Activated T-helper 1 cell treated with anti-CD3 and anti-CD28 coated beads, Interleukin-12 subunit alpha, Interleukin-12 subunit beta, Interleukin-2, Interleukin-4 antibody, amounts not matched to agents 30 ng/mL and 10 ng/mL and 1 ng/mL, durations not matched to agents 14 hours and 24 hours and 36 hours (primary cell): ENCODE measurements at regions of chr5 and their contacts with region 1.

Region 1: DNA sequence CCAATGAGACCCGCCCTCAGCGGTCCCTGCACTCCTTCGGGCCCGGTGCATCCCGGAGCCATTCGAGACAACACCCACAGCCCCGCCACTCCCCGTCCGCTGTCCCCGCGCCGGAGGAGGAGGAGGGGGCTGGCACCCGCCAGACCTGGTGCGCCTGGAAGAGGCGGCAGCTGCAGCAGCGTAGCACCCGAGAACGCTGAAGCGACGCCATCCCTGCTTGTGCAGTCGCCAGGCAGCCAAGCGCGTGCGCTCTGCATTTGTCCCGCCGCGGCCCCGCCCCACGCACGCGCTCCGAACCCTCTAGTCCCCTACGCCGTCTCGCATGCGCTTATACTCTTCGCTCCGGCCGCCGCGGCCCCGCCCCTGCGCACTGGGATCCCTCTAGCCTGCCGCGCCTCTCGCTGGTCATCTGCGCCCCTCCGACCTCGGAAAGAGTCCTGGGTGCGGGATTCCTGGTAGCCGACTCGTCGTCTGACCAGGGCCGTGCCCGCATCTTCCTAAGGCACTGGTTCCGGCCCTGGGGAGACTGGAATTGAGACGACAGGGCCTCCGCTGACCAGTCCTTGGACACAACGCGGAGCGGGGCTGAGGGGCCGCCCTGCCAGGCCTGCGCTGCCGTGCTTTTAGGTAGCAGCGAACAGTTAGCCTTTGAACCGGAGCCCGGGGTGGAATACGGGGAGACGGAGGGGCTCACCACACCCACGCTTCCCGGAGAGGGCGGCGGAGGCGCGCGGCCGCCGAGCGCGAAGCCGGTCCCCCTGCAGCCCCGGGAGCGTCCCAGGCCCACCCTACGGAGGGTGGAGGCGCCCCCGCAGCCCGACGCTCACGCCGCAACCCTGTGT is at the start of gene MRNIP:
- DNase-seq: peak; percentile 87
- H3K4me3 Mint-ChIP-seq: peak within 1 kb of the TSS; percentile 96
- H3K27ac Mint-ChIP-seq: peak within 1 kb of the TSS; percentile 92
- H3K4me1 Mint-ChIP-seq: peaks cover 9% of the 10 kb centered on the region
- H3K27me3 Mint-ChIP-seq: no peaks in the 10 kb centered on the region
- total RNA-seq, gene MRNIP: 24.6 and 26.3 TPM in 2 replicates

Region 2: DNA sequence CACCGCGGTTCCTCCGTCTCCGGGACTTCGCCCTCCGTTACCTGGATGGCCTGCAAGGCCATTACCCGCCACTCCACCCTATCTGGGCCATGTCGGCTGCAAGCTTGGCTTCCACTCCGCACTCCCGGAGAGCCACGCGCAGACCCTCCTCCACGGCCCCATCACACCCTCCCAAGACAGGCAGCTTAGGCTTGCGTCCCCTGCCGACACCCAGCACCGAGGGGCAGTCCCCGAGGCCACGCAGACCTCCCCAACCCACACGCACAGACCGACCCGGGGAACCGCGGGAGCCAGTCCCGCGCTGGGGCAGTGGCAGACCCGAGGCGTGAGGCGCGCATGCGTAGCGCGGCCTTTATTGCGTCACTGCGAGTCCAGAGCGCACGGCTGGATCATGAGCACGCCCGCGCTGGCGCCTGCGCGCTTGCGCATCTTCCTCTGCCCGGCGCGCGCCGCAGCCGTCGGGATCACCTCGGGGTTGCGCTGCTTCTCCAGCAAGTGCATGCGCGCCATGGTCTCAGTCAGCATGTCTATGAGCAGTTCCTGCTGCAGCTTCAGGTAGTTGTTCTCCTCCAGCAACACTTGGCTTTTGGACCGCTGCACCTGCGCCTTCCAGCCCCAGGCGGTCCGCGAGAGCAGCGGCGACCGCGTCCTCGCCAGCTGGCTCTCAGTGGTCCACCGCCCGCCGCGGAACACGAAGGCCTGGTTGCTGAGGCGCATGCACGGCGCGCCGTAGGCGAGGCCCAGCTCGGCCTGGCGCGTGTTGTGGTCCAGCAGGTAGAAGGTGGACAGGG is 180.4 kb before region 1 on chr5:
- intact Hi-C with region 1: loop called (anchors 1 kb)
- DNase-seq: peak; percentile 93
- H3K4me3 Mint-ChIP-seq: peak overlapping the region; percentile 99
- H3K27ac Mint-ChIP-seq: peak overlapping the region; percentile 98
- H3K4me1 Mint-ChIP-seq: peaks cover 21% of the 10 kb centered on the region
- H3K27me3 Mint-ChIP-seq: no peaks in the 10 kb centered on the region

Region 3: GRCh38 chr5:179732417-179732917 is 126.3 kb before region 1 on chr5 and contains the start of gene MAML1:
- intact Hi-C with region 1: loop called (anchors 1 kb)
- DNase-seq: peak; percentile 100
- H3K4me3 Mint-ChIP-seq: peak within 1 kb of the TSS; percentile 95
- H3K27ac Mint-ChIP-seq: peak within 1 kb of the TSS; percentile 93
- H3K4me1 Mint-ChIP-seq: peaks cover 26% of the 10 kb centered on the region
- H3K27me3 Mint-ChIP-seq: no peaks in the 10 kb centered on the region
- total RNA-seq, gene MAML1: 36.0 and 37.6 TPM in 2 replicates

Region 4: GRCh38 chr5:179749857-179750508 is 108.8 kb before region 1 on chr5:
- intact Hi-C with region 1: no loop called
- DNase-seq: no peak
- H3K4me3 Mint-ChIP-seq: no peak overlapping the region
- H3K27ac Mint-ChIP-seq: no peak overlapping the region
- H3K4me1 Mint-ChIP-seq: peaks cover 20% of the 10 kb centered on the region
- H3K27me3 Mint-ChIP-seq: no peaks in the 10 kb centered on the region

Region 5: DNA sequence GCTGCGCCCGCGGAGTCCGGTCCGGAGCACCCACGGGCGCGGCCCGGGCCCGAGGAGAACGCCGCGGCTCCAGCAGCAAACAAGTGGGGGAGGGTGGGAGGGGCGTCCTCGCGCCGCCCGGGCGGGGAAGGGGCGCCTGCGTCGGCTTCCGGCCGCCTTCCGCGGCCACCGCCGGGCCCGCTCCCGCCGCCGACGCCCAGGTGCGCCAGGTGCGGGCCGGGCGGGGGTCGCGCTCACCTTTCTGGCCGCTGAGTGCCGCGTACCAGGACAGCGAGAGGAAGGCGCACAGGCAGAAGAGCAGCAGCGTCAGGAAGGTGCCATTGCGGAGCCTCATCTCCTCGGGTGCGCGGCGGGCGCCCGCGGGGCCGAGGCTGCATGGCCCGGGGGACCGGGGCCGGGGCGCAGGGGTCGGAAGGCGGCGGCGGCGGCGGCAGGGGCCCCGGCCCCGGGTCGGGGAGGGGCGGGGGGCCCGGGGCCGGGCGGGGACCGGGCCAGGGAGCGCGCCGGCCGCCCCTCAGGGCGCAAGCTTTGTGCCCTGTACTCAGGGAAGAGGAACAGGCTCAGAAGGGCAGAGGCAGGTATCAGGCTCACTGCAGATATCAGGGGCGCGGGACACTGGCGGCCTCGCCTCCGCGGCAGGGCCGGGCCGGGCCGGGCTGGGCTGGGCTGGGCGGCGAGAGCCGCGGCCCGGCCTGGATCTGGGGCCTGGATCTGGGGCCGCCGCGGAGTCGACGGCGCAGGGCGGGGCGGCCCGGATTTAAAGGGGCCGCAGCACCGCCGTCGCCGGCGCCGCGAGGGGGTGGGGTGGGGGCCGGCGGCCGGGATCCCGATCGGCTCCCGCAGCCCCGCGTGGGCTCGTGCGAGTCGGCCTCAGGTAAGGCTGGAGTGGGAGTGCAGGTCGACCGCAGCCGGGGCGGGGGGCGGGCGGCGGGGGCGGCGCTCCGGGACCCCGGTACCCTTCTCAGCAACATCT is 52.3 kb before region 1 on chr5 and contains the start of gene MGAT4B:
- intact Hi-C with region 1: loop called (anchors 1 kb)
- DNase-seq: peak; percentile 67
- H3K4me3 Mint-ChIP-seq: peak within 1 kb of the TSS; percentile 86
- H3K27ac Mint-ChIP-seq: peak within 1 kb of the TSS; percentile 81
- H3K4me1 Mint-ChIP-seq: peaks cover 32% of the 10 kb centered on the region
- H3K27me3 Mint-ChIP-seq: no peaks in the 10 kb centered on the region
- total RNA-seq, gene MGAT4B: 124 and 132 TPM in 2 replicates

Region 6: DNA sequence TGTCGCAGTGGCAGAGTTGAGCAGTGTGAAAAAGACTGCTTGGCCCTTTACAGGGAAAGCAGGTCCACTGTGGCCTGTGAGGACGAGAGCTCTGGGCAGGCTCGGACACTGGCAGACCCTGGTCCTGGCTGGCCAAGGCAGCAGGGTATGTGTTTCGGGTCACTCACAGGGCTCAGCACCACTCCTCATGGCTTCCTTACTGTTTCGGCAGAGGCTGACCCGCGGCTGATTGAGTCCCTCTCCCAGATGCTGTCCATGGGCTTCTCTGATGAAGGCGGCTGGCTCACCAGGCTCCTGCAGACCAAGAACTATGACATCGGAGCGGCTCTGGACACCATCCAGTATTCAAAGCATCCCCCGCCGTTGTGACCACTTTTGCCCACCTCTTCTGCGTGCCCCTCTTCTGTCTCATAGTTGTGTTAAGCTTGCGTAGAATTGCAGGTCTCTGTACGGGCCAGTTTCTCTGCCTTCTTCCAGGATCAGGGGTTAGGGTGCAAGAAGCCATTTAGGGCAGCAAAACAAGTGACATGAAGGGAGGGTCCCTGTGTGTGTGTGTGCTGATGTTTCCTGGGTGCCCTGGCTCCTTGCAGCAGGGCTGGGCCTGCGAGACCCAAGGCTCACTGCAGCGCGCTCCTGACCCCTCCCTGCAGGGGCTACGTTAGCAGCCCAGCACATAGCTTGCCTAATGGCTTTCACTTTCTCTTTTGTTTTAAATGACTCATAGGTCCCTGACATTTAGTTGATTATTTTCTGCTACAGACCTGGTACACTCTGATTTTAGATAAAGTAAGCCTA is 22.4 kb before region 1 on chr5:
- intact Hi-C with region 1: loop called (anchors 1 kb)
- DNase-seq: peak; percentile 52
- H3K4me3 Mint-ChIP-seq: peak overlapping the region; percentile 48
- H3K27ac Mint-ChIP-seq: peak overlapping the region; percentile 77
- H3K4me1 Mint-ChIP-seq: peaks cover 16% of the 10 kb centered on the region
- H3K27me3 Mint-ChIP-seq: no peaks in the 10 kb centered on the region

Region 7: GRCh38 chr5:179901462-179901861 is 42.7 kb after region 1 on chr5:
- intact Hi-C with region 1: no loop called
- DNase-seq: no peak
- H3K4me3 Mint-ChIP-seq: no peak overlapping the region
- H3K27ac Mint-ChIP-seq: no peak overlapping the region
- H3K4me1 Mint-ChIP-seq: peaks cover 17% of the 10 kb centered on the region
- H3K27me3 Mint-ChIP-seq: no peaks in the 10 kb centered on the region

Region 8: DNA sequence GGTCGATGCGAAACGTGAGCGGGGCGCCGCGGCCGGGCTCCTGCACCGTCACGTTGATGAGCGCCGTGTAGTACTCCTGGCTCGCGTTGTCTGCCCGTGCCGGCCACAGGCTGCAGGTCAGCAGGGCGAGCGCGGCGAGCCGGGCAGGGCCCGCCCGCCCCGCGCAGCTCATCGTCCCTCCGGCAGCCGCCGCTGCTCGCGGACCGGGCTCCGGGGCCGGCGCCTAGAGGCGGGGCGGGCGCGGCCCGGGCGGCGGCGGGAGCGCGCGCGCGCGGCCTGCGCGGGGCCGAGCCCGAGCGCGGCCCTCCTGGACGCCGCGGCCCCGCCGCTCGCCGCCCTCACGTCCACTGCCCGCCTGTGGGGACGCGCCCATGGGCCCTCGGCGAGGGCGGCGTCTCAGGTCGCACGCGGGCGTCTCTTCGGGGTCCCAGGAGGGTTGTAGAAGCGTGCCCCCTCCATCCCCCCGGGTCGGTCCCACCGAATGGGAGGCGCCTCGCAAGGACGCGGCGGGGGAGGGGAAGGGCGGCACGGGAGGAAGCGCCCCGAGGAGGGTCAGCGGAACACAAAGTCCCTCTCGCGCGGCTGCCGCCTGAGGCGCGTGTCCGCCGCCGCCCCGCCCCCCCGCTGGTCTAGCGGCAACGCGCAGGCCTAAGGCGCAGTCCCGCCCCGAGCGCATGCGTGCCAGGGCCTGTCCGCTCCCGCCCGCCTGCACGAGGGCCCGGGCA is 212.9 kb after region 1 on chr5 and contains the start of gene RNF130:
- intact Hi-C with region 1: loop called (anchors 1 kb)
- DNase-seq: peak; percentile 76
- H3K4me3 Mint-ChIP-seq: peak within 1 kb of the TSS; percentile 82
- H3K27ac Mint-ChIP-seq: peak within 1 kb of the TSS; percentile 50
- H3K4me1 Mint-ChIP-seq: peaks cover 5% of the 10 kb centered on the region
- H3K27me3 Mint-ChIP-seq: peaks cover 39% of the 10 kb centered on the region
- total RNA-seq, gene RNF130: 7.6 and 7.7 TPM in 2 replicates

Region 9: DNA sequence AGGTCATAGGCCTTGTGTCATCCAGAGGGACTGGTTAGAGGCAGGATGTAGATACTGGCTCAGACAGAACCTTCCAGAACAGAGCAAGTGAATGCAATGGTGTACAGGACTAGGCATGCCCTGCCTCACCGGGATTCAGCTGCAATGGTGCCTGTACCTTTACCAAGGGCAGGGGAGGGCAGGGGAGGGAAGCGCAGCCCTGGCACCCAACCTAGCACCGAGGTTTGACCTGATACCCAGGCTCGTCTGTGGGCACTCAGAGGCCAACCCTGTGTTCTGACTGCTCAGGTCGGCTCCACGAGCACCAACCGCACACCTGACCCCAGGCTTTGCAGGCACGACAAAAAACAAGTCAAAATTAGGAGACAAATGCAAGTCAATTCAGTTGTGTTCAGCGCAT is 541.6 kb after region 1 on chr5:
- intact Hi-C with region 1: no loop called
- DNase-seq: no peak
- H3K4me3 Mint-ChIP-seq: no peak overlapping the region
- H3K27ac Mint-ChIP-seq: no peak overlapping the region
- H3K4me1 Mint-ChIP-seq: no peaks in the 10 kb centered on the region
- H3K27me3 Mint-ChIP-seq: no peaks in the 10 kb centered on the region